Ascending aorta (tissue), 2 donors: ENCODE measurements at regions of chr11 and their contacts with region 1.

Region 1: GRCh38 chr11:125625630-125626287 is 796 bp downstream of the CHEK1 start:
- DNase-seq: peak; percentile 34 to 92
- H3K4me3 ChIP-seq: peak overlapping the region; percentile 65 to 68
- H3K27ac ChIP-seq: peak overlapping the region; percentile 88 to 95
- H3K4me1 ChIP-seq: peaks cover 0 to 17% of the 10 kb centered on the region in 2 donors
- H3K27me3 ChIP-seq: no peaks in the 10 kb centered on the region
- CTCF ChIP-seq: no peak

Region 2: DNA sequence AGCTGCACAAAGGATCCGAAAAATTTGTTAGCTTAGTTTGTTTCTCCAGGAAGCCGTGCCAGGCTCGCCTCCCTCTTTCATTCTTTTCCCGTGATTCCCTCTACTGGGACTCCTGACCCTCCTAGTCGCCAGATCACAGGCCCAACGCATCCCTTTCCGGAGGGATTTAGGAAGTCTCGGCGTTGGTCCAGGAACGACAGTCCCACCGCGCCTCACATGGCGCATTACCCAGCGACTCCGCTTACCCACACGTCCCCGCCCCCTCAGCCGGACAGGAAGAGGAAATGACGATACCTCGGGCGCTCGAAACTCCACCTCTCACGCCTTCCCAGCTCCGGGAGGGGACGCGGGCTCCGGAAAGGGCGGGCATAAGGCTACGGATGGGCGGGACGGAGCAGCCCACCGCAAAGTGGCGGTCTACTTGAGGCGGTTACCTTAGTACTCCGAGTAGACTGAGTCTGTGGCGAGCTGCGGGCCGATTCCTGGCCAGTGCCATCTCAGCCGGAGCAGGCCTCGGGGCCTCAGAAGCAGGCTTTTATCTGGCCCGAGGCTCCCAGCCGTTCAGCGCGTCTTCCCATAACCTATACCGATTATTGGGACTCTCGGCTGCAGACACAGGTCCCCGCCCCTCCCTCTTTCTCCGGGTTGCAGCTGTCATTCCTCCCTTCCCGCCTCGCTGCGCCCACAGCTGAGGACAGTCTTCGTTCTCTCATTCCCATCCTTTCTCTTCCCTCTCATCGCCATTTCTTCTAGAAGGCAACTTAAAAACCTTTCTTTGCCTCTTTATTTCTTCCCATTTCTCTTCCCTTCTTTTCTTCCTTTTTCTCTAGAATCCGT is 671.8 kb before region 1 on chr11 and contains the start of gene CCDC15:
- intact Hi-C with region 1: loop called (anchors 10 kb)
- DNase-seq: peak; percentile 88 to 98
- H3K4me3 ChIP-seq: peak within 1 kb of the TSS; percentile 62 to 71
- H3K27ac ChIP-seq: peak within 1 kb of the TSS; percentile 68 to 78
- H3K4me1 ChIP-seq: peaks cover 0 to 8% of the 10 kb centered on the region in 2 donors
- H3K27me3 ChIP-seq: no peaks in the 10 kb centered on the region
- CTCF ChIP-seq: no peak
- total RNA-seq, gene CCDC15: not detected

Region 3: DNA sequence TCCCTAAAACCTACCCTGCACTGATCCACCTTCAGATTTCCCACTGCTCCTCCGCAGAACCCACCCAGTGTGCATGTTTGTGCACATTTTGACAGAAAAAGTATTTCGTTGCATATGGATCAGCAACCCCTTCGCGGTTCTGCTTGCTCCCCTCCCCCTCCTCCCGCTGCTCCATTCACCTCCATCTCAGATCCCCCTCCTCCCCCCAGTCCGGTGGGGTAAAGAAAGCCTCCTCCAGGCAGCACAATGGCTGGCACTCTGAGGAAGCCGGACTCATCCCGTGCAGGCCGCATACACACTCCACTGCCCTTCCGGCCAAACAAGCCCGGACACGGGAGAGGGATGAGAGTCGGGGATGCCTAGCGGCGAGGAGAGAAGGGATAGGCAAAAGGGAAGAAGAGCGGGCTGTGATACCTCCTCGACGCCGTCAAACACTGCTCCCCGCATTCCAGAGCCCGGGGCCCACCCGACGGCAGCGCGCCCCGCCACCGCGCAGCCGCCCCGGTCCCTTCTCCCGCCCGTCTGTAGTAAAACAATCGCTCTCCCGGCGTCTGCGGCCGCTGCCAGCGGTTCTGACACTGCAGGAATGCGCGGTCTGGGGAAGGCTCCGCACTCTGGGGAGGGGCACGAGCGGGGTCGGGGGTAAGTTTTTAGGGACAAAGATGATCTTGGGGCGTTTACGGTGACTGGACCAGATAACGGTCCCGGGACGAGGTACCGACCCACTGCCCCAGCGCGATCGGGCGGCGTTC is 130.6 kb before region 1 on chr11:
- intact Hi-C with region 1: loop called (anchors 1 kb)
- DNase-seq: peak in 1 of 2 donors; percentile 72
- H3K4me3 ChIP-seq: peak overlapping the region; percentile 63 to 98
- H3K27ac ChIP-seq: peak overlapping the region; percentile 80 to 96
- H3K4me1 ChIP-seq: peaks cover 7 to 8% of the 10 kb centered on the region in 2 donors
- H3K27me3 ChIP-seq: no peaks in the 10 kb centered on the region
- CTCF ChIP-seq: no peak

Region 4: GRCh38 chr11:125568970-125569914 is 56.5 kb before region 1 on chr11 and contains the start of gene EI24:
- intact Hi-C with region 1: loop called (anchors 1 kb)
- DNase-seq: peak; percentile 47 to 95
- H3K4me3 ChIP-seq: peak within 1 kb of the TSS; percentile 94 to 96
- H3K27ac ChIP-seq: peak within 1 kb of the TSS; percentile 83 to 84
- H3K4me1 ChIP-seq: peaks cover 5 to 16% of the 10 kb centered on the region in 2 donors
- H3K27me3 ChIP-seq: no peaks in the 10 kb centered on the region
- CTCF ChIP-seq: peak; percentile 60 to 74 (median 73)
- total RNA-seq, gene EI24: 111 TPM

Region 5: GRCh38 chr11:126062679-126063506 is 437.1 kb after region 1 on chr11 and contains the start of gene CDON:
- intact Hi-C with region 1: loop called (anchors 5 kb)
- DNase-seq: peak; percentile 43 to 93
- H3K4me3 ChIP-seq: peak within 1 kb of the TSS; percentile 78 to 89
- H3K27ac ChIP-seq: peak within 1 kb of the TSS; percentile 64 to 68
- H3K4me1 ChIP-seq: peaks cover 0 to 8% of the 10 kb centered on the region in 2 donors
- H3K27me3 ChIP-seq: no peaks in the 10 kb centered on the region
- CTCF ChIP-seq: peak in 1 of 3 experiments; percentile 12
- total RNA-seq, gene CDON: 33.0 TPM

Region 6: DNA sequence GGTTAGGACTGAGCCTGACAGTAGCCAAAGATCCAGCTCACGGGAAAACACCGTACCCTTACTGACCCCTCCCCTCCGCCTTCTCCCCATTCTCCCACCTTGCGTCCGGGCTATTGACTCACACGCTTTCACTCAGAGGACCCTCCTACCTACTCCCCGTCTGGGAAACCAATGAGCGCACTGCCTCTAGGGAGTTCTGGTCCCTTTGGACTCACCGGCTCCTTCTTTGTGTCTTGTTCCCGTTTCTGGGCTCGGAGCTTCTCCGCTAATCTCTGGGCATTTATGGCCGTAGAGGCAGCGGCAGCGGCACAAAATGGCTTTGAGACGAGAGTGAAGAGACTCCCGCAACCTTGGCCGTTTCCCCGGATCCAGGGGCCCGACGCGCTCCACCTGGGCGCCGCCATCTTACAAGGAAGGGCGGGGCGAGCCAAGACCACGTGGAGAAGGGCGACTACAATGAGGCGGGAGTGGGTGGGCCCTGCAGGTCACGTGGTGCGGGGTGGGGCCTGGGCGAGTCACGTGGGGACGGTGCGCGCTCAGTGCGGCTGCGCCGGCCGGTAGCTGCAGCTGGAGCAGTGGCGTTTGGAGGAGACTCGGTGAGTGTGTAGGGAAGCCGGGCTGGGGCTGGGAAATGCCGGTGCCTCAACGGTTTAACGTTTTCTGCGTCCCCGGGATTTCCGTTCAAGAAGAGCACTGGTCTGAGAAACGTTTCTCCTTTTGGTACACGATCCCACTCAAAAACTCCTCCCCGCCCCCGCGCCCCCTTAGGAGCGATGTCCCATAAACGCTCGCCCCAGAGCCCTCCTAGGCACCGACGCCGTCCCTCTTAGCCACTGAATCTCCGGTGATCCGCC is 585.7 kb after region 1 on chr11 and contains the starts of genes FAM118B and RPUSD4:
- intact Hi-C with region 1: loop called (anchors 5 kb)
- DNase-seq: peak; percentile 90 to 99
- H3K4me3 ChIP-seq: peak within 1 kb of the TSS; percentile 78 to 89
- H3K27ac ChIP-seq: peak within 1 kb of the TSS; percentile 6 to 42
- H3K4me1 ChIP-seq: peaks cover 0 to 5% of the 10 kb centered on the region in 2 donors
- H3K27me3 ChIP-seq: no peaks in the 10 kb centered on the region
- CTCF ChIP-seq: no peak
- total RNA-seq, gene FAM118B: 14.0 TPM
- total RNA-seq, gene RPUSD4: 7.3 TPM